ENCODE measurements at regions of chr7 and their contacts with region 1.

Region 1: GRCh38 chr7:37201003-37201875 is 247.4 kb downstream of the ELMO1 start:
- DNase-seq: peak; percentile 83
- H3K4me3 ChIP-seq: no peak overlapping the region
- H3K27ac ChIP-seq: no peak overlapping the region
- H3K4me1 ChIP-seq: peaks cover 0 to 15% of the 10 kb centered on the region in 2 experiments; a peak in 2 of 4 replicates
- H3K27me3 ChIP-seq: no peaks in the 10 kb centered on the region
- CTCF ChIP-seq: peak; percentile 99
- EP300 ChIP-seq: peak in 1 of 2 experiments; percentile 26; a peak in 1 of 4 replicates
- RAD21 ChIP-seq: peak; percentile 91

Region 2: GRCh38 chr7:36448781-36449379 is 752.4 kb before region 1 on chr7:
- CTCF ChIA-PET with region 1: interaction called, 10 read pairs
- POLR2A ChIA-PET with region 1: no interaction called
- DNase-seq: no peak
- H3K4me3 ChIP-seq: no peak overlapping the region
- H3K27ac ChIP-seq: peak overlapping the region; percentile 13 to 55; a peak in 3 of 4 replicates
- H3K4me1 ChIP-seq: peaks cover 3 to 21% of the 10 kb centered on the region in 2 experiments
- H3K27me3 ChIP-seq: no peaks in the 10 kb centered on the region
- CTCF ChIP-seq: no peak
- EP300 ChIP-seq: peak in 1 of 2 experiments; percentile 36; a peak in 1 of 4 replicates
- RAD21 ChIP-seq: no peak

Region 3: GRCh38 chr7:36473454-36474282 is 727.6 kb before region 1 on chr7:
- CTCF ChIA-PET with region 1: interaction called, 214 read pairs
- POLR2A ChIA-PET with region 1: no interaction called
- DNase-seq: peak; percentile 57
- H3K4me3 ChIP-seq: no peak overlapping the region
- H3K27ac ChIP-seq: no peak overlapping the region
- H3K4me1 ChIP-seq: peaks cover 6 to 14% of the 10 kb centered on the region in 2 experiments
- H3K27me3 ChIP-seq: no peaks in the 10 kb centered on the region
- CTCF ChIP-seq: peak; percentile 60
- EP300 ChIP-seq: no peak
- RAD21 ChIP-seq: peak; percentile 86

Region 4: DNA sequence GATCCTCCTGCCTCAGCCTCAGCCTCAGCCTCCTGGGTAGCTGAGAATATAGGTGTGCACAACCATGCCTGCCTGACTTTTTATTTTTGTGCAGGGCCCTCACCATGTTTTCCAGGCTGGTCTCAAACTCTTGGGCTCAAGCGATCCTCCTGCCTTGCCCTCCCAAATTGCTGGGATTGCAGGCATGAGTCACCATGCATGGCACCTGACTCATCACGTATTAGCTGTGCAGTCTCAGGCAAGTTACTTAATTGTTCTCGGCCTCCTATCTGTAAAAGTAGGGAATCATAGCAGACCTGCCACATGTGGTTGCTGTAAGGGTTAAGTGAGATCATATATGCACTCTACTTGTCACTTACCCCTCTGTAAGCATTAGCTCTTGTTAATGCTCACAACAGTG is 694.4 kb before region 1 on chr7:
- CTCF ChIA-PET with region 1: interaction called, 21 read pairs
- POLR2A ChIA-PET with region 1: no interaction called
- DNase-seq: no peak
- H3K4me3 ChIP-seq: no peak overlapping the region
- H3K27ac ChIP-seq: no peak overlapping the region
- H3K4me1 ChIP-seq: peaks cover 0 to 9% of the 10 kb centered on the region in 2 experiments; a peak in 1 of 4 replicates
- H3K27me3 ChIP-seq: no peaks in the 10 kb centered on the region; the same call in 1 of the 2 replicates
- CTCF ChIP-seq: no peak
- EP300 ChIP-seq: no peak
- RAD21 ChIP-seq: no peak

Region 5: GRCh38 chr7:36979810-36980248 is 221.4 kb before region 1 on chr7:
- CTCF ChIA-PET with region 1: interaction called, 95 read pairs
- POLR2A ChIA-PET with region 1: no interaction called
- DNase-seq: no peak
- H3K4me3 ChIP-seq: no peak overlapping the region
- H3K27ac ChIP-seq: no peak overlapping the region; a peak in 1 of 4 replicates
- H3K4me1 ChIP-seq: peaks cover 0 to 34% of the 10 kb centered on the region in 2 experiments; a peak in 2 of 4 replicates
- H3K27me3 ChIP-seq: peaks cover 11% of the 10 kb centered on the region; the same call in 1 of the 2 replicates
- CTCF ChIP-seq: no peak
- EP300 ChIP-seq: no peak
- RAD21 ChIP-seq: no peak

Region 6: GRCh38 chr7:37259319-37259821 is 58.1 kb after region 1 on chr7:
- CTCF ChIA-PET with region 1: no interaction called
- POLR2A ChIA-PET with region 1: no interaction called
- DNase-seq: no peak
- H3K4me3 ChIP-seq: no peak overlapping the region
- H3K27ac ChIP-seq: no peak overlapping the region
- H3K4me1 ChIP-seq: peaks cover 0 to 3% of the 10 kb centered on the region in 2 experiments; a peak in 1 of 4 replicates
- H3K27me3 ChIP-seq: no peaks in the 10 kb centered on the region
- CTCF ChIP-seq: no peak
- EP300 ChIP-seq: no peak
- RAD21 ChIP-seq: no peak